Esophagus squamous epithelium (tissue), 5 donors: ENCODE measurements at regions of chr19 and their contacts with region 1.

Region 1: DNA sequence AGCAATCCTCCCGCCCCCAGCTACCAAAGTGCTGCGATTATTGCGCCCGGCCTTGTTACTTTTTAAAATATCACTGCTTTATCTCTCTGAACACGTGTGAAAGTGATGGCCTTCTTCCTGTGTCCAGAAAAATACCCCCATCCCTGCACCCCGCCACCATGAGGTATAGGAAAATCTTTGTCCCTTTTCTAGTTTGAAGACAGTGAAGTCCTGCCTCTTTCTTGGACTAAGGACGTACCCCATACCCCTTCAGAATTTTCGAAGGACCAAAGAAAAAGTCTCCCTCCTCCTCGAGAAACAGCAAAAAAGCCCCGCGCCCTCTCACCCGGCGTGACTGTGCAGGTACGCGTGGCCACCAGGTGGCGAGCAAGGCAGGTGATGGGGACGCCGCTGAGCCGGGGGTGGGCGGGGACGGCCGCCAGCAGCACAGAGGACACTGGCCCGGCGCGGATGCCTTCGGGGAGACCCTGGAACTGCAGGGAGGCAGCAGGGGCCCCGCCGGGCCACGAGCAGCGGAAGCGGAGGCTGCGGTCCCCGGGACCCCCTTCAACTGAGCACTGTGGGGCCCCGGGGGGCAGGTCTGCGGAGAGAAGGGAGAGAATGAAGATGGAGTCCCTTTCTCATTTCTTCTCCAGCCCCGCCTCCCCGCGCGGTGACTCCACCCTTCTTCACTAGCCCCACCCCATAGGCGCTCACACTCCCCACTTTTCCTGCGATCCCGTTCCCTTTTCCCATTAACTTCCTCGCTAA is 3.2 kb downstream of the VSIG10L start:
- DNase-seq: peak; percentile 49
- H3K4me3 ChIP-seq: peak overlapping the region; percentile 49 to 85 (median 63)
- H3K27ac ChIP-seq: peak overlapping the region; percentile 40 to 93 (median 90)
- H3K4me1 ChIP-seq: peaks cover 11 to 58% (median 12%) of the 10 kb centered on the region in 3 donors
- H3K27me3 ChIP-seq: no peaks in the 10 kb centered on the region
- CTCF ChIP-seq: peak; percentile 88 to 94 (median 90)
- POLR2A ChIP-seq: no peak

Region 2: DNA sequence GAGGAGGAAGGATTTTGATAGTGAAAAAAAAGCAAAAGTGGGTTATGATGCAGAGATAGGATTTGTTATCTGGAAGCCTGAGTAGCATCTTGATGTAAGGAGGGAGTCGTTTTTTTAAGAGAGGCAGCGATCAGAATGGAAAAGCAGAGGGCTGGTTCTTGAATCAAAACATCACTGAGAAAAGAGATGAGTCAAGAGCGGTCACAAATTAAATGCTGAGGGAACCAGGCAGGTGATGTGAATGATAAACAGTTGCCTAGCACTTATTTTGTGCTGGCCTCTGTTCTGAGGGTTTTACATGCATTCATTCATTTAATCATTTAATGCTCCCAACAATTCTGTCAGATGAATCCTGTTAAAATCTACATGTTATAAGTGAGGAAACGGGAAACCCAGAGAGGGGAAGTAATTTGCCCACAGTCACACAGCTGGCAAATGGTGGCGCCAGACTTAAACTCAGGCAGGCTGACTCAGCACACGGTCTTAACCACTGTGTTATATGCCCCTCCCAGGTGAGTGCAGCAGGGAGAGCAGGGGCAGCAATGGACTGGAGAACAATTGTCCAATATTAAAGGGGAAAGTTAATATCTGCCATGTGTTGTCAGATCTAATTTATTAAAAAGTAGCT is 66.4 kb before region 1 on chr19:
- intact Hi-C with region 1: no loop called
- DNase-seq: no peak
- H3K4me3 ChIP-seq: no peak overlapping the region
- H3K27ac ChIP-seq: no peak overlapping the region
- H3K4me1 ChIP-seq: no peaks in the 10 kb centered on the region
- H3K27me3 ChIP-seq: peaks cover 0 to 24% (median 0%) of the 10 kb centered on the region in 4 donors
- CTCF ChIP-seq: no peak
- POLR2A ChIP-seq: no peak

Region 3: GRCh38 chr19:51407511-51408131 is 68.9 kb after region 1 on chr19:
- intact Hi-C with region 1: loop called (anchors 10 kb)
- DNase-seq: no peak
- H3K4me3 ChIP-seq: no peak overlapping the region
- H3K27ac ChIP-seq: no peak overlapping the region
- H3K4me1 ChIP-seq: no peaks in the 10 kb centered on the region
- H3K27me3 ChIP-seq: peaks cover 0 to 7% (median 0%) of the 10 kb centered on the region in 4 donors
- CTCF ChIP-seq: peak in 5 of 6 experiments; percentile 44 to 73 (median 57)
- POLR2A ChIP-seq: no peak

Region 4: GRCh38 chr19:51439021-51439465 is 100.3 kb after region 1 on chr19:
- intact Hi-C with region 1: loop called (anchors 10 kb)
- DNase-seq: no peak
- H3K4me3 ChIP-seq: no peak overlapping the region
- H3K27ac ChIP-seq: no peak overlapping the region
- H3K4me1 ChIP-seq: peaks cover 0 to 12% (median 2%) of the 10 kb centered on the region in 3 donors
- H3K27me3 ChIP-seq: peaks cover 0 to 80% (median 0%) of the 10 kb centered on the region in 4 donors
- CTCF ChIP-seq: peak in 5 of 6 experiments; percentile 4 to 48 (median 33)
- POLR2A ChIP-seq: no peak